Activated CD4-positive, alpha-beta T cell treated with anti-CD3 and anti-CD28 coated beads, Interleukin-2, amount 10 ng/mL, durations not matched to agents 24 days and 14 days (primary cell): ENCODE measurements at regions of chr12 and their contacts with region 1.

Region 1: DNA sequence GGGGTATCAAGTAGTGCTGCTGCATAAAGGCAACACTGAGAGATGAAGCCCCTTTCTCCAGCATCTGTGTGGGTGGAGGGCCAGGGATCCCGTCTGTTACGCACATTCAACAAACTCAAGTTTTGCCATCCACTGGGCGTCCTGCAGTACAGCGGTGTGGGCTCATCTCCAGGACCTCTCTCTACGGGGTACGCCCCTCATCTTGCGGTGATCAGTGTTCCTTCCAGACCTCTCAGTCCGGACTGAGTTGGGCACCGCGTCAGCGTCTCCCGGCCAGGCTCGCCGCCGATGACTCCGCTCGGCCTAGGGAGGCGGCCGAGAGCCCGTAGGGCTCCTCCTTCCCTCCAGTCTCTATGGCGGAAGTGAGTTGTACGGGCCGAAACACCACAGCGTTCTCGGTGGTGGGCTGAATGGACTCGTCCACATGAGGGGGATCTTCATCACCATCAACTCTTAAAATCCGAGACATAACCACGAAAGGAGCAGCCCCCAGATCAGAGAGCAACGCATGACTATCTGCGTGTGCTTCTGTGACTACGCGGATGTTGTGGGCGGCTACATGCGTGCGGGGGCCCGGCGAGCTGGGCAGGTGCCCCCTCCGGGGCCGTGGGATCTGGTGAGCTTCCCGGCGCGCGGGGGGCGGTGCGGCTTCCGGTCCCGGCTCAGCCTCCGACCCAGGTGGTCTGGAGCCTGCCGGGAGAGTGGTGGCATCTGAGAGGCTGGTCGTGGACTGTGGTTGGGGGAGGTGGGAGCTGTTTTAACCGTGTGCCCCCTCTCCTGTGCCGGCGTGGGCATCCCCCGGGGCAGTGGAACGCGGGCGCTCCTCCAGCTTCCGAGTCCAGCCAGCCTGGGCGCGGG is at the start of gene ATG101:
- DNase-seq: peak; percentile 96
- H3K4me3 Mint-ChIP-seq: peak within 1 kb of the TSS; percentile 97
- H3K27ac Mint-ChIP-seq: peak within 1 kb of the TSS; percentile 98
- H3K4me1 Mint-ChIP-seq: peaks cover 45% of the 10 kb centered on the region
- H3K27me3 Mint-ChIP-seq: no peaks in the 10 kb centered on the region
- total RNA-seq, gene ATG101: 51.2 and 61.4 TPM in 2 replicates

Region 2: GRCh38 chr12:52032804-52033502 is 36.6 kb before region 1 on chr12:
- intact Hi-C with region 1: loop called (anchors 2 kb)
- DNase-seq: peak; percentile 97
- H3K4me3 Mint-ChIP-seq: peak overlapping the region; percentile 81
- H3K27ac Mint-ChIP-seq: peak overlapping the region; percentile 78
- H3K4me1 Mint-ChIP-seq: peaks cover 37% of the 10 kb centered on the region
- H3K27me3 Mint-ChIP-seq: peaks cover 20% of the 10 kb centered on the region

Region 3: GRCh38 chr12:52082988-52083637 is 13.6 kb after region 1 on chr12:
- intact Hi-C with region 1: loop called (anchors 1 kb)
- DNase-seq: peak; percentile 91
- H3K4me3 Mint-ChIP-seq: no peak overlapping the region
- H3K27ac Mint-ChIP-seq: peak overlapping the region; percentile 3
- H3K4me1 Mint-ChIP-seq: peaks cover 7% of the 10 kb centered on the region
- H3K27me3 Mint-ChIP-seq: peaks cover 12% of the 10 kb centered on the region

Region 4: GRCh38 chr12:52268212-52268611 is 198.7 kb after region 1 on chr12:
- intact Hi-C with region 1: no loop called
- DNase-seq: no peak
- H3K4me3 Mint-ChIP-seq: no peak overlapping the region
- H3K27ac Mint-ChIP-seq: no peak overlapping the region
- H3K4me1 Mint-ChIP-seq: no peaks in the 10 kb centered on the region
- H3K27me3 Mint-ChIP-seq: peaks cover 20% of the 10 kb centered on the region